Cardiac septum (tissue), 1 donor: ENCODE measurements at regions of chr1 and their contacts with region 1.

Region 1: GRCh38 chr1:24642481-24643361 is at the start of gene SRRM1:
- DNase-seq: peak; percentile 100
- total RNA-seq, gene SRRM1: 78.2 TPM

Region 2: DNA sequence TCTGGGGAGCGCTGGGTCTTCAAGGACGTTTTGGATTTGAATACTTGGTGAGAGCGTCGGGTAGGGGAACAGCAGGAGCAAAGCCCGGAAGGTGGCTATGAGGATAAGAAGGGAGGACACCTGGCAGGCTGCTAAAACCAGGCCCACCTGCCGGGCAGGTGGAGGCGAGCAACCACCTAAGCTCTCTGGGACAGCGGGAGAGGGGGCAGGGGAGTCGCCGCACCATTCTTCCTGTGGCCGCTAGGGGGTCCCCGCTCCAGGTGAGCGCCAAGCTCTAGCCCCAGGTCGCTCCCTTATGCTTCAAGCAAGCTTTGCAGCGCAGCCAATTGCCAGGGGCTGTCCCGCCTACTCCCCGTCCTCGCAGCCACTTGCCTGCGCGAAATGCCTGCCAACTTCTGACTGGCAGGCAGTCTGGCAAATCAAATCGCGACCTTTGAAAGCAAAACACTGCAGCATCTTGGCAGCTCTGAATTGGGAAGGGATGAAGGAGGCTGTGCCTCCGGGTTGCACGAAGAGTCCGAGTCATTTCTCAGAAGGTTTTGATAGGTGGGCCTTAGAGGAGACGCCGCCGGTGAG is 227.3 kb before region 1 on chr1 and contains the start of gene NIPAL3:
- intact Hi-C with region 1: loop called (anchors 5 kb)
- DNase-seq: peak; percentile 99
- total RNA-seq, gene NIPAL3: 21.3 TPM

Region 3: GRCh38 chr1:24694380-24694843 is 51.7 kb after region 1 on chr1:
- intact Hi-C with region 1: loop called (anchors 2 kb)
- DNase-seq: peak; percentile 79

Region 4: GRCh38 chr1:24744911-24745710 is 102.4 kb after region 1 on chr1 and contains the start of gene CLIC4:
- intact Hi-C with region 1: loop called (anchors 2 kb)
- DNase-seq: peak; percentile 100
- total RNA-seq, gene CLIC4: 316 TPM